ENCODE measurements at regions of chr6 and their contacts with region 1.

Region 1: DNA sequence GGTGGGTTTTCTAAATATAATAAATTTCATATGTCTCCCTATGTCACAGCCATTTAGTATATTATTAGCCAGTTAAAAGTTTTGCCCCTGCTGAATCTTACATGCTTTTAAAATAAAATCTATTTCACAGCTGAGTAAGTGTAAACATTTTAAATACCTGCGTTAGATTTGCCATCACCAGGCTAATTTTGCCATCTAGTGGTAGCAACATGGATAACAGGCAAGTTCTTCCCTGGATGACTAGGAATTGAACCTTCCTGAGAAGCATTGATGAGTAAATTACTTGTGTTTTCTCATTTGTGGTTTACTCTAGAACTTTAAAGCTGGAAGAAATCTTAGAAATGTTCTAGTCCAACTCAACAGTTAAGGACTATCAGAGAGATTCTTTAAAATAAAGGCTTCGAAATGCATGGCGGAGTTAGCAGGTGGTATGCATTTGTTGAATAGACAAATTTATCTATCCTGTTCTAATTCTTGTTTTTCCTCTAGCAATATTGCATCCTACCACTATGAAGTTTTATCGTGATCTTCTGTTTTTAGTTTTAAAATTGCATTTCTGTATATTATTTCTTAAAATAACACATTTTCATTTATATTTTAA is 2.6 kb downstream of the PRSS35 start:
- H3K4me3 Mint-ChIP-seq: no peak overlapping the region
- H3K27ac Mint-ChIP-seq: no peak overlapping the region
- H3K4me1 Mint-ChIP-seq: peaks cover 18% of the 10 kb centered on the region
- H3K27me3 Mint-ChIP-seq: peaks cover 48% of the 10 kb centered on the region

Region 2: DNA sequence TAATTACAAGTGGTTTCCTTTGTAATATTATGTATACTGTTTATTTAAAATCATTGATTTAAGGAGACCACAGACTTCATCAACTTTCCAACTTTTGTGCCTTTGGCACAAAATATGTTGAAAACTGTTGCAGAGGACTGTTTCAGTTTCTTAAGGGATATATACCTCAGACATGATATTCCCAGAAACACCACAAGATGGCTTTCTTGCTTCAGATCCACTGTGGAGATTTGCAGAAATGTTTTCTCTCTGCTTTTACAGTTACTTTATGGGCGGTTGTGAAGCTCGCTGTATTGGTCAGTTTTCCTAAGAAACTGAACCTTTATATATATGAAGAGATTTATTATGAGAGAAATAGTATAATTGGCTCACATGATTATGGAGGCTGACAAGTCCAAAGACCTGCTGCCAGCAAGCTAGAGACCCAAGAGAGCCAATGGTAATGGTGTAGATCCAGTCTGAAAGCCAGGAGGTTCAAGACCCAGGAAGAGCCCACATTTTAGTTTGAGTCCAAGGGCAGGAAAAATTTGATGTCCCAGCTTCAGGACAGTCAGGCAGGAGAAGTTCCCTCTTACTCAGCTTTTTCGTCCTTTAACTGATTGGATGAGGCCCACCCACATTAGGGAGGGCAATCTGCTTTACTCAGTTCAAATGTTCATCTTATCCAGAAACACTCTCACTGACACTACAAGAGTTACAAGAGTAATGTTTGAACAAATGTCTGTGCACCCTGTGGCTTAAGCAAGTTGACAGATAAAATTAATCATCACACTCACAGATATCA is 96.9 kb before region 1 on chr6:
- intact Hi-C with region 1: loop called (anchors 1 kb)
- H3K4me3 Mint-ChIP-seq: no peak overlapping the region
- H3K27ac Mint-ChIP-seq: no peak overlapping the region
- H3K4me1 Mint-ChIP-seq: peaks cover 22% of the 10 kb centered on the region
- H3K27me3 Mint-ChIP-seq: peaks cover 2% of the 10 kb centered on the region

Region 3: GRCh38 chr6:83480470-83480869 is 34.5 kb before region 1 on chr6:
- intact Hi-C with region 1: no loop called
- H3K4me3 Mint-ChIP-seq: no peak overlapping the region
- H3K27ac Mint-ChIP-seq: no peak overlapping the region
- H3K4me1 Mint-ChIP-seq: no peaks in the 10 kb centered on the region
- H3K27me3 Mint-ChIP-seq: peaks cover 17% of the 10 kb centered on the region

Region 4: DNA sequence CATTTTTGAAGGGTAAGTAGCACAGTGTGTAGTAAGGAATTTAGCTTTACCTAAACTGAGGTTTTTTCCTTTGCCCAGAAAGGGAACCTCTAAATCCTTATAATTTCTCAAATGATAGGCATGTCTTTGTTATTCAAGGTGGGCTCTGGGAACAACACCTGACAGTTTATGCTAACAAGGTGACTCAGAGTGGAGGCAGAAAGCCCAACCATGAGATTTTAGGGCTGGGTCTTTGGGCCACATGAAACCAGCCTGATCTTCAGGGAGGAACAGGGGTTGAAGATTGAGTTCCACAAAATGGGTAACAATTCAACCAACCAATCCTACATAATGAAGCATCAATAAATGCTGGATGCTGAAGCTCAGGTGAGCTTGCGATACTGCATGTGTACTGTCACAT is 44.0 kb after region 1 on chr6:
- intact Hi-C with region 1: no loop called
- H3K4me3 Mint-ChIP-seq: no peak overlapping the region
- H3K27ac Mint-ChIP-seq: no peak overlapping the region
- H3K4me1 Mint-ChIP-seq: no peaks in the 10 kb centered on the region
- H3K27me3 Mint-ChIP-seq: peaks cover 6% of the 10 kb centered on the region

Region 5: GRCh38 chr6:83615025-83615999 is 100.3 kb after region 1 on chr6:
- intact Hi-C with region 1: no loop called
- H3K4me3 Mint-ChIP-seq: no peak overlapping the region
- H3K27ac Mint-ChIP-seq: no peak overlapping the region
- H3K4me1 Mint-ChIP-seq: no peaks in the 10 kb centered on the region
- H3K27me3 Mint-ChIP-seq: peaks cover 1% of the 10 kb centered on the region

Region 6: DNA sequence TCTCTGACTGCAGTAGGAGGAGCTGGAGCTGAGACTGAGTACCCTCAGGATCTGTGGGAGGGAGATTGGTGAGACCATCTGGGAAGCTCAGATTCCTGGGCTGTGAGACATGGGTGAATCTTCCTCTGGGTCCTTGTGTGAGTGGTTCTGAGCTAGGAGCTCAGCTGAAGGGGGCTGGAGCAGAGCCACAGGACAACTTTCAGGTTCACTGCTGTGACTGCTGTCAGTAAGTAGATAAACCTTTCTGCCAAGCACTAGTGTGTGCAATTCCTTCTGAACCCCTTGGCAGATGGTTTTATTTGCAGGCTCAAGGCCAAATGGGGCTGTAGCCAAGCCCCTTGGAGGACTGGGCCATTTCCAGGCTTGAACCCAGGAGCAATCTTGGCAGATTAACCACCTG is 243.6 kb after region 1 on chr6:
- intact Hi-C with region 1: no loop called
- H3K4me3 Mint-ChIP-seq: no peak overlapping the region
- H3K27ac Mint-ChIP-seq: no peak overlapping the region
- H3K4me1 Mint-ChIP-seq: no peaks in the 10 kb centered on the region
- H3K27me3 Mint-ChIP-seq: no peaks in the 10 kb centered on the region

Measured in dendritic cell treated with granulocyte-macrophage colony-stimulating factor and Interleukin-4, amounts not matched to agents 40 ng/mL and 50 ng/mL, for 4 days (primary cell).